Left colon (tissue), 2 donors: ENCODE measurements at regions of chr5 and their contacts with region 1.

Region 1: DNA sequence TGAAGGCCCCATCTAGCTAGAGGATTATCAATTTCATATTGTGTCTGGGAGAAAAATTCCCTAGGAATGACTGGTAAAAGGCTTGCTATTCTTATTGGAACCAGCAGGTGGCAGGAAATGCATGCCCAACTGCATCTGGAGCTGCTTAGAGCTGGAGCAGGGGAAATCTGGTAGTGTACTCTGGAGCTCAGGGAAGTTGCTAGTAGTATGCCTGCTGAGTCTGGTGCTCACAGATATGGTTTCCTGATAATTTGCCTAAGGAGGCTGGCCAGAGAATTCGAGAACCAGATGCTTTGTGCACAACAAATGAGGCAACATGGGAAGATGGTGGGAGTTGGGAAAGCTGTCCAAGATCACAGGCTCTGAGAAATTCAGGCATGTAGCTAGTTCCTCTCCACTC is 53.7 kb downstream of the G3BP1 start:
- DNase-seq: peak; percentile 28 to 44
- ATAC-seq: peak; percentile 88

Region 2: GRCh38 chr5:151935135-151935695 is 109.8 kb after region 1 on chr5:
- intact Hi-C with region 1: no loop called
- DNase-seq: no peak
- ATAC-seq: no peak

Region 3: DNA sequence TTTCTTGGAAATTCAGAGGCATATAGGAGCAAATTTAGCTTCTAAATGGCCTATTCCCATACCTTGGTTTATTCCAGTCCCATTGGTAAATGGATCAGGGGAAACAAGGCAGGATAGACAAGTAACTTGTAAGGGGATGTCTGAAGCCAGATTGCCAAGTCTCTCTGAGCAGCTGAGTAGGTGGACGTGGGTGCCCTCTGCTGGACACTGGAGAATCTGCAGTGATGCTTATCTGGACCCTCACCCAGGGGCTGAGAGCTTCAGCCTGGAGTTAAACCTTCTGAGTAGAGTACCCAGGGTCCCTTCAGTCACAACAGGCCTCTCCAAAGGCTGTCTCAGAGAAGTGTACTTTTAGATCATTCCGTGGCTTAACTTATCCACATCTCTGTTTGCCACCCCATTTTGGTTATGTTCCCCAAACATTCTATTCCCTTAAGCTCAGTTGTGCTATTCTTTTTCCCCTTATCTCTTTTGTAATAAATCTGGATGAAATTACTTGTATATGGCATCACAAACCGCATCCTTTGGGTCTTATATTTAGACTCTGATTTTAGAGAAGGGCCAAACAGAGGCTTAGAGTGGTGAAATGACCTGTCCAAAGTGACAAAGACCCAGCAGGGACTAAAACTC is 317.5 kb after region 1 on chr5:
- intact Hi-C with region 1: loop called (anchors 5 to 10 kb)
- DNase-seq: peak in 1 of 2 donors; percentile 49
- ATAC-seq: peak; percentile 56

Region 4: GRCh38 chr5:152505442-152506042 is 680.1 kb after region 1 on chr5:
- intact Hi-C with region 1: loop called in 1 of 2 experiments (anchors 10 kb)
- DNase-seq: peak in 1 of 2 donors; percentile 64
- ATAC-seq: peak; percentile 84